ENCODE measurements at regions of chr19 and their contacts with region 1.

Region 1: GRCh38 chr19:23758187-23759074 is at the start of gene ZNF681:
- DNase-seq: peak; percentile 94
- H3K4me3 Mint-ChIP-seq: peak within 1 kb of the TSS; percentile 95
- H3K27ac Mint-ChIP-seq: peak within 1 kb of the TSS; percentile 93
- H3K4me1 Mint-ChIP-seq: peaks cover 14% of the 10 kb centered on the region
- H3K27me3 Mint-ChIP-seq: no peaks in the 10 kb centered on the region
- total RNA-seq, gene ZNF681: 3.9 TPM

Region 2: GRCh38 chr19:23273590-23274413 is 484.6 kb before region 1 on chr19:
- CTCF ChIA-PET with region 1: no interaction called
- POLR2A ChIA-PET with region 1: interaction called, 7 read pairs
- intact Hi-C with region 1: loop called (anchors 10 kb)
- DNase-seq: peak; percentile 95
- H3K4me3 Mint-ChIP-seq: peak overlapping the region; percentile 91
- H3K27ac Mint-ChIP-seq: peak overlapping the region; percentile 89
- H3K4me1 Mint-ChIP-seq: peaks cover 20% of the 10 kb centered on the region
- H3K27me3 Mint-ChIP-seq: no peaks in the 10 kb centered on the region

Region 3: GRCh38 chr19:23686621-23687423 is 71.6 kb before region 1 on chr19 and contains the start of gene ZNF675:
- CTCF ChIA-PET with region 1: interaction called, 5 read pairs
- POLR2A ChIA-PET with region 1: interaction called, 15 read pairs
- intact Hi-C with region 1: loop called (anchors 1 kb)
- DNase-seq: peak; percentile 93
- H3K4me3 Mint-ChIP-seq: peak within 1 kb of the TSS; percentile 97
- H3K27ac Mint-ChIP-seq: peak within 1 kb of the TSS; percentile 97
- H3K4me1 Mint-ChIP-seq: peaks cover 38% of the 10 kb centered on the region
- H3K27me3 Mint-ChIP-seq: no peaks in the 10 kb centered on the region
- total RNA-seq, gene ZNF675: 17.1 to 21.0 TPM

Region 4: DNA sequence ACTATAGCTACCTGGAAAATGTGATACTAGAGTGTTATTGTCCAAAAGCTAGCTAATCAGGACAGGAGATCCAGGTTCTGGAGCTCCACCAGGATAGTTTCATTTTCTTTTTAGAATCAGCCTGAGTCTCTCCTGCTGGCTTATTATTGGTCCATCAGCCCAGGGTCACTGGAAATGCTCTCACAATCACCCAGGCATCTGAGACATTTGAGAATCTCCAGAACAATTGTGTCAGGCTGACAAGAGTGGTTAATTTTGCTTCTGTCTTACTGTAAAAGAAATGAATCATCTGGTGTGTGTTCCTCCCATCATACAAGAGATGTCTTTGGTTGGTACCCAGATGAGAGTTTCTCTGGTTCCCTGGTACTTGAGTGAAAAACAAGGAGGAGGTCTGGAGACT is 43.9 kb after region 1 on chr19:
- CTCF ChIA-PET with region 1: no interaction called
- POLR2A ChIA-PET with region 1: no interaction called
- intact Hi-C with region 1: loop called (anchors 2 kb)
- DNase-seq: peak; percentile 28
- H3K4me3 Mint-ChIP-seq: peak overlapping the region; percentile 62
- H3K27ac Mint-ChIP-seq: peak overlapping the region; percentile 76
- H3K4me1 Mint-ChIP-seq: peaks cover 30% of the 10 kb centered on the region
- H3K27me3 Mint-ChIP-seq: no peaks in the 10 kb centered on the region

Region 5: GRCh38 chr19:24033301-24033962 is 275.0 kb after region 1 on chr19:
- CTCF ChIA-PET with region 1: no interaction called
- POLR2A ChIA-PET with region 1: no interaction called
- intact Hi-C with region 1: loop called (anchors 5 kb)
- DNase-seq: peak; percentile 91
- H3K4me3 Mint-ChIP-seq: peak overlapping the region; percentile 99
- H3K27ac Mint-ChIP-seq: peak overlapping the region; percentile 97
- H3K4me1 Mint-ChIP-seq: peaks cover 52% of the 10 kb centered on the region
- H3K27me3 Mint-ChIP-seq: no peaks in the 10 kb centered on the region

Measured in activated CD4-positive, alpha-beta memory T cell treated with anti-CD3 and anti-CD28 coated beads for 36 hours (primary cell).